Colonic mucosa (tissue), 4 donors: ENCODE measurements at regions of chr1 and their contacts with region 1.

Region 1: GRCh38 chr1:27416387-27417111 is 24.1 kb downstream of the GPR3 start:
- DNase-seq: peak; percentile 56
- H3K4me3 ChIP-seq: no peak overlapping the region
- H3K27ac ChIP-seq: no peak overlapping the region
- H3K4me1 ChIP-seq: no peaks in the 10 kb centered on the region
- H3K27me3 ChIP-seq: no peaks in the 10 kb centered on the region
- CTCF ChIP-seq: peak; percentile 64

Region 2: DNA sequence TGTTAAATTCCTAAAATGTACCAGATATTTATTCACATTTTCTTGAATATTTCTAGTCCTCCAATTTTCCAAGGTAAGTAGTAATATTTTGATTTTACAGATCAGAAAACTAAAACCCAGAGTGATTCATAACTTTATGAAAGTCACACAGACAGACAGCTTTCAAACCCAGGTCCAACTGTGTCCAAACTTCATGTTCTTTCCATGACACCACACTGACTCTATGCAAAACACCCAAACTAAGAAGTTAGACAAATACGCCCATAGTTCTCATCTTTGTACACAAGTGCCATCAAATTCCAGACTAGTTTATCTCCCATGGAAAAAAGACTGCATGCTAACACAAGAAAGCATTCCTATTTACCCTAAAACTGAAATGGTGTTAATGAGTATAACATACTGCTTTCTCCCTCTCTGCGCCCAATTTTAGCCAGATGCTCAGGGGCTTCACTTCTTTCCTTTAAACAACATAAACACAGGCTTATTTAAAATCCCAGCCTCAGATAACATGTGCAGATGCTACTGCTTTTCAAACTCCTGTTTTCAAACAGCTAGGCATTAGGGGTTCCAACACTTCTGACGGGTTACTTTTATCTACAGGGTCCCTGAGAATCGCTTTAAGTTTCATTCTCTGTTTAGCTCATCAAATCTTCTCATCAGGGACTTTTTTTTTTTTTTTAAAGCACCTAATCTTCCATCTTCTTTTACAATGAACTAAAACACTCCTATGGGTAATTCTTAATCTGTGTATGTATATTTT is 28.8 kb after region 1 on chr1:
- intact Hi-C with region 1: no loop called
- DNase-seq: no peak
- H3K4me3 ChIP-seq: no peak overlapping the region
- H3K27ac ChIP-seq: no peak overlapping the region
- H3K4me1 ChIP-seq: no peaks in the 10 kb centered on the region
- H3K27me3 ChIP-seq: no peaks in the 10 kb centered on the region
- CTCF ChIP-seq: no peak

Region 3: DNA sequence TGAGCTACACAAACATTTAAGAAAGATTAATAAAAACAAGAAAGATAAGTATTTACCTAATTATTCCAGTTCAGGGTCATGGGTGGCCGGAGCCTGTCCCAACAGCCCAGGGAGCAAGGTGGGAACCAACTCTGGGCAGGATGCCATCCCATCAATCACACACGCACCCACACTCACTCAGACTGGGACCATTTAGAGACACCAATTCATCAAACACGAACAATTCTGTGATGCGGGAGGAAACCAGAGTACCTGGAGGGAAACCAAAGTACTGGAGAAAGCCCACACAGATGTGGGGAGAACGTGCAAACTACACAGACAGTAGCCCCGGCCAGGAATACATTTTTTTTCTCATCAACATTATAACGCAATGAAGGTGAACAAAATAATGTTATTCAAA is 57.2 kb after region 1 on chr1:
- intact Hi-C with region 1: loop called (anchors 5 kb)
- DNase-seq: no peak
- H3K4me3 ChIP-seq: no peak overlapping the region
- H3K27ac ChIP-seq: no peak overlapping the region
- H3K4me1 ChIP-seq: no peaks in the 10 kb centered on the region
- H3K27me3 ChIP-seq: no peaks in the 10 kb centered on the region
- CTCF ChIP-seq: no peak